ENCODE measurements at regions of chr7 and their contacts with region 1.

Region 1: DNA sequence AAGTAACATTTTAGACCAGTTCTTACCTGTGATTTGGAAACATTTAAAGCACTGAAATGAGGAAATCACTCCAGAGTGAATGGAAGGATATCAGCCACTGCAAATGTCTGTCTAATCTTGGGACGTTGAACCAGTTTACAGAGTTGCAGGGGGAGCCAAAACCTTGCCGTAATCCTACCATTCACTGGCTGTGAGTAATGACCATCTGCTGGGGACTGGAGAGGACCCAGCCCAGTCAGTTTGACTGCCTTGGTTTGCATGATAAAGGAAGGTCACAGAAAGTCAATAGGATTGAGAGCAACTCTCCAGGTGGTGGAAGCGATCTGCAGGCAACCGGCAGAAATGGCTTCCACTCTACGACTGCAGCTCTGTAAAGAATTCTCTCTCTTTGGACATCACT is 167.2 kb downstream of the AKR1D1 start:
- DNase-seq: peak; percentile 9
- H3K4me3 ChIP-seq: no peak overlapping the region
- H3K27ac ChIP-seq: no peak overlapping the region
- H3K4me1 ChIP-seq: no peaks in the 10 kb centered on the region
- H3K27me3 ChIP-seq: no peaks in the 10 kb centered on the region
- CTCF ChIP-seq: no peak

Region 2: DNA sequence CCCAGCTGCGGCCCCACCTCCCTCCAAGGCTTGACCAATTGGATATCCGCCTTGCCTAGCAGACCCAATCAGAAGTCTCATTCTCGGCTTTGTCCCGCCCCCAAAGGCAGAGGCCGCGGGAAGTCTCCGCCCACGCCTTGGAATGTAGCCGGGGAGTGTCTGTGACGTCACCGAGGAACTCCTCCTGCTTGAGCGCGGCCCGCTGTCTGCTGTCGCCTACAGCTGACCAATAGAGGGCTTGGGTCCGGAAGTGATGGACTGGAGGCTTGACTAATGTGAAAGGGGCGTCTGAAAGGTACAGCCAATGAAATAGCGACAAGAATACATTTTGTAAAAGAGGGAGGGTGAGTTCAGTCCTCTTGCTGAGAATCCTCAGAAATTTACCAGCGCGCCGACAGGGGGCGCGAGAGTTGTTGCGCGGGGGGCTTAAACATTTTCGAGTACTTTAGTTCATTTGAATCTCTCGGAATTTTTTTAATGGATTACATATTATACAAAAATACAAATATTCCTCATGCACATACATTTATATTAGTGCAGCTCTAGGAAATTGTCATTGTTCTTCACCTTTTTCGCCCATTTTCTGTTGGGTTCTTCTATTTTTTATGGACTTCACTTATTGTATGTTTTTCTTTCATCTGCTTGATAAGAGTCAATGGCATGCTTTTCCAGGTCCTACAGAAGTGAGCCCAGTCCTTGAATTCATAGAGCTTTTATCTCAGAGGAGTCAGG is 241.2 kb before region 1 on chr7:
- CTCF ChIA-PET with region 1: no interaction called
- POLR2A ChIA-PET with region 1: no interaction called
- intact Hi-C with region 1: no loop called
- DNase-seq: peak; percentile 99
- H3K4me3 ChIP-seq: peak overlapping the region; percentile 72
- H3K27ac ChIP-seq: peak overlapping the region; percentile 47
- H3K4me1 ChIP-seq: peaks cover 11% of the 10 kb centered on the region
- H3K27me3 ChIP-seq: no peaks in the 10 kb centered on the region
- CTCF ChIP-seq: peak; percentile 97

Region 3: GRCh38 chr7:138212133-138212713 is 31.2 kb before region 1 on chr7:
- CTCF ChIA-PET with region 1: no interaction called
- POLR2A ChIA-PET with region 1: no interaction called
- intact Hi-C with region 1: no loop called
- DNase-seq: no peak
- H3K4me3 ChIP-seq: no peak overlapping the region
- H3K27ac ChIP-seq: no peak overlapping the region
- H3K4me1 ChIP-seq: no peaks in the 10 kb centered on the region
- H3K27me3 ChIP-seq: no peaks in the 10 kb centered on the region
- CTCF ChIP-seq: no peak

Region 4: GRCh38 chr7:138459413-138460175 is 216.2 kb after region 1 on chr7:
- CTCF ChIA-PET with region 1: no interaction called
- POLR2A ChIA-PET with region 1: interaction called, 18 read pairs
- intact Hi-C with region 1: no loop called
- DNase-seq: no peak
- H3K4me3 ChIP-seq: peak overlapping the region; percentile 67
- H3K27ac ChIP-seq: no peak overlapping the region
- H3K4me1 ChIP-seq: no peaks in the 10 kb centered on the region
- H3K27me3 ChIP-seq: no peaks in the 10 kb centered on the region
- CTCF ChIP-seq: no peak; the same call in 1 of the 2 replicates

Measured in A673 (cell line).